ENCODE measurements at regions of chr16 and their contacts with region 1.

Region 1: DNA sequence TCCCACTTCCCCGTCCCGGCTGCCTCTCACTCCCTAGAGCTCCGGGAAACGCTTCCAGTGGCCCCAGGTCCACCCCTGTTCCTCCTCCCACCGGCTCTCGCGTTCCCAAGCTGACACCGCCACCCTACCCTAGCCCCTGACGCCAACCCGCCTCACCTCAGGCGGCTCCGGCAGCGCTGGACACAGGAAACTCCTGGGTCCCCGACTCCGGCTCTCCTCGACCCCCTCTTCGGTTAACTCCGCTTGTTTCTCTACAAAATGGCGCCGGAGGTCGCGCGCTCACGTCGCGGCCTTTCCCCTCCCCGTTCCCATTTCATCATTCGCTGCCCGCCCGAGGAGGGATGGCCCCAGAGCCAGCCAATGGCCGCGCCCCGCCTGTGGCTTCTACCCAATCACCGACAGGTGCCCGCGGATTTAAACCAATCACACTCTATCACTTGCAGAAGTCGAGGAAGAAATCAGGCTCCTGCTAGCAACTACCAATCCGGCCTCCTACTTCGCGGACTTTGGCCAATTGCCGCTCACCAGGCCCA is at the start of gene CNOT1:
- DNase-seq: peak; percentile 100
- H3K4me3 ChIP-seq: peak within 1 kb of the TSS; percentile 87
- H3K4me3 Mint-ChIP-seq: peak within 1 kb of the TSS; percentile 92
- H3K27ac Mint-ChIP-seq: peak within 1 kb of the TSS; percentile 99
- H3K4me1 ChIP-seq: peaks cover 6% of the 10 kb centered on the region
- H3K4me1 Mint-ChIP-seq: peaks cover 13% of the 10 kb centered on the region
- H3K27me3 ChIP-seq: no peaks in the 10 kb centered on the region
- H3K27me3 Mint-ChIP-seq: no peaks in the 10 kb centered on the region
- CTCF ChIP-seq: no peak
- total RNA-seq, gene CNOT1: 413 and 417 TPM in 2 replicates

Region 2: GRCh38 chr16:58494981-58495520 is 134.6 kb before region 1 on chr16:
- CTCF ChIA-PET with region 1: no interaction called
- POLR2A ChIA-PET with region 1: no interaction called
- intact Hi-C with region 1: loop called (anchors 2 kb)
- DNase-seq: peak; percentile 87 to 90
- H3K4me3 ChIP-seq: no peak overlapping the region
- H3K4me3 Mint-ChIP-seq: no peak overlapping the region
- H3K27ac Mint-ChIP-seq: peak overlapping the region; percentile 80
- H3K4me1 ChIP-seq: peaks cover under 1% of the 10 kb centered on the region
- H3K4me1 Mint-ChIP-seq: no peaks in the 10 kb centered on the region
- H3K27me3 ChIP-seq: no peaks in the 10 kb centered on the region
- H3K27me3 Mint-ChIP-seq: peaks cover 4% of the 10 kb centered on the region
- CTCF ChIP-seq: peak; percentile 40 to 67

Region 3: DNA sequence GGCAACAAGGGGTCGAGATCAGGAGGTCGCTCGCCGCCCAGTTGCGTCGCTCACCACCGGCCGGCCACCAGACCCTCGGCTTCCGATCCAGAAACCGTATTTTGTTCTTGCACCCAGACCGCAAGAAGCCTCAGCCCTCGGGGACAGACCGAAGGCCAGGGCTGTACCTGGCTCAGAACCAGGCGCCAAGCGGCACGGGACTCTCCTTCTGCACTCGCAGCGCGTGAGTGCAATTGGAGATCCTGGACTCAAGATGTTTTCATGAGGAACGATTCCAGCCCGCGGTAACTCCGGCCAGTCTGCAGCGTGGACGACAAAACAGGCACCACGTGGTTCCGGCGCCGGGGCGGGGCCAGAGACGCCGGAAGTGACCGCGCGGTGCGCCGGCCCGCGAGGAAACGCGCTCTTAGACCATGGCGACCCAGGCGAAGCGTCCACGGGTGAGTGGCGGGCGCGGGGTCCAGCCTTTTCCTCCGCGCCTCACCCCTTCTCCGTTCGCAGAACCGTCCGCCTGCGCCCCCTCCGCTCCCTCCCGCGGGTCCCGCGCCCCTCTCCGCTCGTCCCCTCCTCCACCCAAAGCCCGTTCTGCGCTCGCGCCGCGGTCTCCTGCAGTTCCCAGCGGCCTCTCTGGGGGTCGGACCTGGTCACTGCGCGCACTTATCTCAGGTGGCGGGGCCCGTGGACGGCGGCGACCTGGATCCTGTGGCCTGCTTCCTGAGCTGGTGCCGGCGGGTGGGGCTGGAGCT is 114.3 kb before region 1 on chr16 and contains the start of gene SETD6:
- CTCF ChIA-PET with region 1: interaction called, 3 read pairs
- POLR2A ChIA-PET with region 1: interaction called, 3 read pairs
- intact Hi-C with region 1: loop called (anchors 1 kb)
- DNase-seq: peak; percentile 91 to 95
- H3K4me3 ChIP-seq: peak within 1 kb of the TSS; percentile 88
- H3K4me3 Mint-ChIP-seq: peak within 1 kb of the TSS; percentile 93
- H3K27ac Mint-ChIP-seq: peak within 1 kb of the TSS; percentile 97
- H3K4me1 ChIP-seq: peaks cover 18% of the 10 kb centered on the region
- H3K4me1 Mint-ChIP-seq: peaks cover 43% of the 10 kb centered on the region
- H3K27me3 ChIP-seq: no peaks in the 10 kb centered on the region
- H3K27me3 Mint-ChIP-seq: no peaks in the 10 kb centered on the region
- CTCF ChIP-seq: peak; percentile 16 to 36
- total RNA-seq, gene SETD6: 34.9 and 41.7 TPM in 2 replicates